Naive thymus-derived CD4-positive, alpha-beta T cell (primary cell): ENCODE measurements at regions of chr11 and their contacts with region 1.

Region 1: DNA sequence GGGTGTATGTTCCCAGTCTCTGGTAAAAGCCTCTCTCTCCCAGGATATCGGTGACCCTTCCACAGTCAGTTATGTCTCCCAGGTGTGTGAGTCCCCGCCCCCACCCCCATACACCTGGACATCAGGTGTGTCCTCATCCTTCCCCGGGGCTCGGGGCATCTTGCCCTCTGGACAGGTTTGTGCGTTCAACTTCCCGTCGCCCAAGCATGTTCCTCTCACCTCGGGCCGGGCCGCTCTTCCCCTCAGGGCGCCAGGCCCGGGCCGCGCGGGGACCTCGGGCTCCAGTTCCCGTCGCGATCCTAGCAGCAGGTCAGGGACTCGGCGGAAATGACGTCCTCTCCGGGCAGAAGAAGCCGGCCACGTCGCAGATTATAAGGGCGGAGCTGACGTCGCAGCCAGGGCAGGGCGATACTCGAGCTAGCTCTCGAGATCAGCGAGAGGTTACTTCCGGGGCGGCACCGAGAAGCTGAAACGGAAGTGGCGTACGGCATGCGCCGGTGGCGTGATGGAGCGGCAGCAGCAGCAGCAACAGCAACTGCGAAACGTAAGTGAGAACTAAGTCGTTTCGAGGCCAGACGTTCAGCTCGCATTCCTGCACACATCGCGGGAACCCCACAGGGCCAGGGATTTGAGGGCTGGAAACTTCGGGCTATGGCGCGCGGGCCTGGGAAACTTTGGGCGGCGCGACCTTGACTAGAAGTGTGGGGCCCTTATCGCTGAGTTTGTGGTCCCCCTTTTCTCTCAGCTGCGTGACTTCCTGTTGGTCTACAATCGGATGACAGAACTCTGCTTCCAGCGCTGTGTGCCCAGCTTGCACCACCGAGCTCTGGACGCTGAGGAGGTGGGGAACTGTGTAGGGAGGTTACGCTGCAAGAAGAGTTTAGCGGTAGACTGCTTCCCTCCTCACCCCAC is at the starts of genes ARFIP2 and TIMM10B:
- DNase-seq: peak; percentile 83 to 98 (median 94)
- ATAC-seq: peak; percentile 98
- H3K4me3 ChIP-seq: peak within 1 kb of the TSS; percentile 74
- H3K4me3 Mint-ChIP-seq: peak within 1 kb of the TSS; percentile 87 to 99 (median 97)
- H3K27ac ChIP-seq: peak within 1 kb of the TSS; percentile 86
- H3K27ac Mint-ChIP-seq: peak within 1 kb of the TSS; percentile 93 to 99 (median 98)
- H3K4me1 ChIP-seq: peaks cover 22 to 24% of the 10 kb centered on the region in 2 donors
- H3K4me1 Mint-ChIP-seq: peaks cover 29 to 48% (median 43%) of the 10 kb centered on the region in 7 donors
- H3K27me3 ChIP-seq: no peaks in the 10 kb centered on the region
- H3K27me3 Mint-ChIP-seq: no peaks in the 10 kb centered on the region
- total RNA-seq, gene ARFIP2: 48.6 to 63.4 (median 53.8) TPM
- total RNA-seq, gene TIMM10B: 39.3 to 68.4 (median 59.2) TPM

Region 2: GRCh38 chr11:4607781-4608666 is 1873.2 kb before region 1 on chr11 and contains the start of gene TRIM68:
- CTCF ChIA-PET with region 1: no interaction called
- POLR2A ChIA-PET with region 1: no interaction called
- intact Hi-C with region 1: loop called in 1 of 2 experiments (anchors 10 kb)
- DNase-seq: peak; percentile 87 to 96 (median 94)
- ATAC-seq: peak; percentile 100
- H3K4me3 ChIP-seq: peak within 1 kb of the TSS; percentile 80
- H3K4me3 Mint-ChIP-seq: peak within 1 kb of the TSS; percentile 80 to 97 (median 91)
- H3K27ac ChIP-seq: peak within 1 kb of the TSS; percentile 88
- H3K27ac Mint-ChIP-seq: peak within 1 kb of the TSS; percentile 85 to 96 (median 94)
- H3K4me1 ChIP-seq: peaks cover 15 to 22% of the 10 kb centered on the region in 2 donors
- H3K4me1 Mint-ChIP-seq: peaks cover 29 to 68% (median 56%) of the 10 kb centered on the region in 7 donors
- H3K27me3 ChIP-seq: no peaks in the 10 kb centered on the region
- H3K27me3 Mint-ChIP-seq: peaks cover 0 to 2% (median 0%) of the 10 kb centered on the region in 5 donors
- total RNA-seq, gene TRIM68: 3.8 to 29.5 (median 12.4) TPM

Region 3: DNA sequence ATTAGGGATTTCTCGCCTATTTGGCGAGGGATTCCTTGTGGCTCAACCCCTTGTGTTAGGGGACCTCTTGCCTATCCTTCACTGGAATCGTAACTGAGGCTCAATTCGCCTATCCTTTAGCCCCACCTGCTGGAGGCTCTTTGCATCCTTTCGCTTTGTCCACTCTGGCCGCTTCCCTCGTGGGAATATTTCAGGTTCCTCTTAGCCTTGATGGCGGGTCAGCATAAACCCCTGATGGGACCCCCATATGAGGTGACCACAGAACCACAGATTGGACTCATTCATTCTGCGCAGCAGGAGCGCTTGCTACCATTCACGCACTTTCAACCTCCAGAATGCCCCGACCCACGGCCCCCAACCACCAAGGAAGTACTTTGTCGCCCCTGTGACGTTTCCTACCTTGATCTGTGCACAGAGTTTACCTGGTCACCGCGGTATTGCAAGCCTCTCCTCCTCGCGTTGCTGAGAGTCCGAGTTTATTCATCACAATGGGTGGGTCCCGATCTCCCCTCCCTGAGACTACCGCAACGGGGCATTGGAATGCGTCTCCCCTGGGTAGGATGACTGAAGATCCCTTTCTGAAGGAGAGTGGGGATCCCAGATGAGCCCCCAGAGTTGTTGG is 672.7 kb before region 1 on chr11 and contains the start of gene OR52N2:
- CTCF ChIA-PET with region 1: no interaction called
- POLR2A ChIA-PET with region 1: no interaction called
- intact Hi-C with region 1: no loop called
- DNase-seq: peak; percentile 38 to 73 (median 66)
- ATAC-seq: peak; percentile 92
- H3K4me3 ChIP-seq: peak within 1 kb of the TSS; percentile 61
- H3K4me3 Mint-ChIP-seq: peak within 1 kb of the TSS; percentile 86 to 95 (median 90)
- H3K27ac ChIP-seq: no peak within 1 kb of the TSS
- H3K27ac Mint-ChIP-seq: peak within 1 kb of the TSS in 8 of 9 donors; percentile 1 to 87 (median 20)
- H3K4me1 ChIP-seq: no peaks in the 10 kb centered on the region
- H3K4me1 Mint-ChIP-seq: peaks cover 7 to 16% (median 10%) of the 10 kb centered on the region in 7 donors
- H3K27me3 ChIP-seq: peaks cover 0 to 6% of the 10 kb centered on the region in 2 donors
- H3K27me3 Mint-ChIP-seq: peaks cover 12 to 29% (median 25%) of the 10 kb centered on the region in 5 donors
- total RNA-seq, gene OR52N2: not detected

Region 4: GRCh38 chr11:6389921-6390724 is 91.1 kb before region 1 on chr11 and contains the start of gene SMPD1:
- CTCF ChIA-PET with region 1: no interaction called
- POLR2A ChIA-PET with region 1: interaction called, 16 read pairs
- intact Hi-C with region 1: loop called (anchors 1 kb)
- DNase-seq: peak; percentile 85 to 94 (median 92)
- ATAC-seq: peak; percentile 97
- H3K4me3 ChIP-seq: peak within 1 kb of the TSS; percentile 94
- H3K4me3 Mint-ChIP-seq: peak within 1 kb of the TSS; percentile 91 to 98 (median 94)
- H3K27ac ChIP-seq: peak within 1 kb of the TSS; percentile 95
- H3K27ac Mint-ChIP-seq: peak within 1 kb of the TSS; percentile 93 to 100 (median 99)
- H3K4me1 ChIP-seq: peaks cover 25 to 53% of the 10 kb centered on the region in 2 donors
- H3K4me1 Mint-ChIP-seq: peaks cover 31 to 74% (median 66%) of the 10 kb centered on the region in 7 donors
- H3K27me3 ChIP-seq: no peaks in the 10 kb centered on the region
- H3K27me3 Mint-ChIP-seq: peaks cover 0 to 13% (median 0%) of the 10 kb centered on the region in 5 donors
- total RNA-seq, gene SMPD1: 43.0 to 70.9 (median 55.4) TPM

Region 5: DNA sequence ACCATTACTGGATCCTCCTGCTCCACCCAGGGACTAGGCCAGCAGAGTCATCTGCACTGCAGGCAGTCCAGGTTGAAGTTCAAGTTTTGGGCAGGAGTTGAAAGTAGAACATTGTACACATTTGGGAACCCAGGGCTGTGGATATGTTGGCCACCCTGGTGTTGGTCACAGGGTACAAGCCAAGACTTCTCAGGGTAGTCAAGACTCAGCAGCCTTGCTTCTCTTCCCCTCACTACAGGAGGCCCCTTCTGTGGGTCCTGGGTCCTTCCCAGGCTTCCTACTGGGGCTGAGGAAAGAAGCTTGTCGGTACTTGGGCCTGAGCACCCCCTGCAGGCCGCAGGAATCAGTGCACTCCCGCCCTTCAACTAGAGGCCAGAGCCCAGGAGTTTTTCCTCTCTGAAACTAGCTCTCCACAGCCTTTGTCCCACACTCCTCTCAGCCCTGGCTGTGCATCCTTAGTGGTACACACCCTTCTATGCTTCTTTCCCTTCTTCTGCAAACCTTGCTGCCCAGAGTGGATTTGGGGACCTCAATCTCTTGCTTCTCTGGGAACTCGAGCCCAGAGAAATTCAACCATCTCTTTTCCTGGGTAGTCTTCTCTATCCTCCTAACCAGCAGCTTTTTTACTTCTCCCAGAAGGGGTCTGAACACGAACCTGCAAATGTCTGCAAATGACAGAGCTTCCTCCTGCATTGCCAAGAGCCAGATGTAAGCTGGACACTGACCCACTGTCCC is 37.8 kb before region 1 on chr11:
- CTCF ChIA-PET with region 1: no interaction called
- POLR2A ChIA-PET with region 1: interaction called, 3 read pairs
- intact Hi-C with region 1: loop called (anchors 2 to 5 kb)
- DNase-seq: peak; percentile 28 to 67 (median 53)
- ATAC-seq: peak; percentile 87
- H3K4me3 ChIP-seq: no peak overlapping the region
- H3K4me3 Mint-ChIP-seq: no peak overlapping the region
- H3K27ac ChIP-seq: no peak overlapping the region
- H3K27ac Mint-ChIP-seq: no peak overlapping the region
- H3K4me1 ChIP-seq: peaks cover 12 to 19% of the 10 kb centered on the region in 2 donors
- H3K4me1 Mint-ChIP-seq: peaks cover 0 to 5% (median 0%) of the 10 kb centered on the region in 7 donors
- H3K27me3 ChIP-seq: no peaks in the 10 kb centered on the region
- H3K27me3 Mint-ChIP-seq: peaks cover 0 to 12% (median 0%) of the 10 kb centered on the region in 5 donors

Region 6: DNA sequence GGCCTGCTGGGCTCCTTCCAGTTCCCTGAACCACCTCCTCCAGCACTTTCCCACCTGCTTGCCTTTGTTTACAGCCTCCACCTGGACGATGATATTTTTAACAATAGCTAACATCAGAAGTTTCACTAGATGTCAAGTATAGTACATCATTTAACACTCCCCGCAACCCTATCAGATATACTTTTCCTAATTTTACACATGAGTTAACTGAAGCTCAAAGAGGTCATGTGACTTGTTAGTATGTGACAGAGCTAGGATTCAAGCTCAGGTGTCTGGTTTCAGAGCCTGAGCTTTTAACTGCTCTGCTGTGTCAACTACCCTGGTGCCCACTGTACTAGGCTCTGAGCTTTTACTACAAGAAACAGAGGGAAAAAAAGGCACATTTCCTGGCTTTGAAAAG is 26.2 kb before region 1 on chr11:
- CTCF ChIA-PET with region 1: no interaction called
- POLR2A ChIA-PET with region 1: no interaction called
- intact Hi-C with region 1: no loop called
- DNase-seq: no peak
- ATAC-seq: no peak
- H3K4me3 ChIP-seq: no peak overlapping the region
- H3K4me3 Mint-ChIP-seq: no peak overlapping the region
- H3K27ac ChIP-seq: no peak overlapping the region
- H3K27ac Mint-ChIP-seq: no peak overlapping the region
- H3K4me1 ChIP-seq: no peaks in the 10 kb centered on the region
- H3K4me1 Mint-ChIP-seq: no peaks in the 10 kb centered on the region
- H3K27me3 ChIP-seq: no peaks in the 10 kb centered on the region
- H3K27me3 Mint-ChIP-seq: no peaks in the 10 kb centered on the region

Region 7: GRCh38 chr11:6531267-6531752 is 50.0 kb after region 1 on chr11:
- CTCF ChIA-PET with region 1: no interaction called
- POLR2A ChIA-PET with region 1: no interaction called
- intact Hi-C with region 1: loop called (anchors 2 to 5 kb)
- DNase-seq: peak in 7 of 9 donors; percentile 7 to 51 (median 39)
- ATAC-seq: peak; percentile 83
- H3K4me3 ChIP-seq: no peak overlapping the region
- H3K4me3 Mint-ChIP-seq: no peak overlapping the region
- H3K27ac ChIP-seq: no peak overlapping the region
- H3K27ac Mint-ChIP-seq: no peak overlapping the region
- H3K4me1 ChIP-seq: peaks cover 4 to 5% of the 10 kb centered on the region in 2 donors
- H3K4me1 Mint-ChIP-seq: peaks cover 5 to 14% (median 11%) of the 10 kb centered on the region in 7 donors
- H3K27me3 ChIP-seq: no peaks in the 10 kb centered on the region
- H3K27me3 Mint-ChIP-seq: no peaks in the 10 kb centered on the region

Region 8: DNA sequence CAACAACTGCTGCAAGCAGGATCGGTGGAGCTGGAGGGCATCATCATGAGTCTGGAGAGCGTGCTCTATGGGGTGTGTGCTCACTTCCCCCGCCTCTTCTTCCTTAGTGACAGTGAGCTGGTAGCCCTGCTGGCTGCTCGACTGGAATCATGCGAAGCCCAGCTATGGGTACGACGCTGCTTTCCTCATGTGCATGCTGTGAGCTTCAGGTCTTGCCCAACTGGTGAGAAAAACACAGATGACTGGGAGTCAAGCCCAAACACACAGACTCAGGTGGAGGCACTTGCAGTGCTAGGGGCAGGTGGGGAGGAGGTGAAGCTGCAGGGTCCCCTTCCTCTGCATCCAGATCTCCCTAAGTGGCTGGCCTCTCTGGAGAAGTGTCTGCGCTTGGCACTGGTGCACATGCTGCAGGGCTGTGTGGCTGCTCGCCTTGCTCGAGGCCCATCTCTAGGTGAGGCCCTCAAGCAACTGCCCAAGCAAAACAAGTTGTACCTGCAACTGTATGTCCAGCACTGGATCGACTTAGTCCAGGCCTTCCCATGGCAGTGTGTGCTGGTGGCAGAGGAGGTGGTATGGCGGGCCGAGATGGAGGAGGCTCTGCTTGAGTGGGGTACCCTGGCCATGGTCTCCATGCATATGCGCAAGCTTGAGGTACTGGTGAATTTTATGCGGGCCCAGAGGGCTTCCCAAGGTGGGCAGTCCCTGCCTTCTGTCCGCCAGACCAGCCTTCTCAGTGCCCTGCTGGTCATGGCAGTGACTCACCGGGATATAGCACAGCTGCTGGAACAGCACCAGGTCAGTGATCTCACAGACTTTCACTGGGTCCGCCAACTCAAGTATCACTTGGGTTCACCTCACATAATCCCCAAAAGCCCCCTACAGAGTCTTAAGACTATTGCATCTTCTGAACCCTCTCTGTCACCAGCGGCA is 63.9 kb after region 1 on chr11:
- CTCF ChIA-PET with region 1: no interaction called
- POLR2A ChIA-PET with region 1: no interaction called
- intact Hi-C with region 1: no loop called
- DNase-seq: no peak
- ATAC-seq: no peak
- H3K4me3 ChIP-seq: no peak overlapping the region
- H3K4me3 Mint-ChIP-seq: no peak overlapping the region
- H3K27ac ChIP-seq: no peak overlapping the region
- H3K27ac Mint-ChIP-seq: no peak overlapping the region
- H3K4me1 ChIP-seq: no peaks in the 10 kb centered on the region
- H3K4me1 Mint-ChIP-seq: peaks cover 0 to 19% (median 5%) of the 10 kb centered on the region in 7 donors
- H3K27me3 ChIP-seq: no peaks in the 10 kb centered on the region
- H3K27me3 Mint-ChIP-seq: no peaks in the 10 kb centered on the region

Region 9: DNA sequence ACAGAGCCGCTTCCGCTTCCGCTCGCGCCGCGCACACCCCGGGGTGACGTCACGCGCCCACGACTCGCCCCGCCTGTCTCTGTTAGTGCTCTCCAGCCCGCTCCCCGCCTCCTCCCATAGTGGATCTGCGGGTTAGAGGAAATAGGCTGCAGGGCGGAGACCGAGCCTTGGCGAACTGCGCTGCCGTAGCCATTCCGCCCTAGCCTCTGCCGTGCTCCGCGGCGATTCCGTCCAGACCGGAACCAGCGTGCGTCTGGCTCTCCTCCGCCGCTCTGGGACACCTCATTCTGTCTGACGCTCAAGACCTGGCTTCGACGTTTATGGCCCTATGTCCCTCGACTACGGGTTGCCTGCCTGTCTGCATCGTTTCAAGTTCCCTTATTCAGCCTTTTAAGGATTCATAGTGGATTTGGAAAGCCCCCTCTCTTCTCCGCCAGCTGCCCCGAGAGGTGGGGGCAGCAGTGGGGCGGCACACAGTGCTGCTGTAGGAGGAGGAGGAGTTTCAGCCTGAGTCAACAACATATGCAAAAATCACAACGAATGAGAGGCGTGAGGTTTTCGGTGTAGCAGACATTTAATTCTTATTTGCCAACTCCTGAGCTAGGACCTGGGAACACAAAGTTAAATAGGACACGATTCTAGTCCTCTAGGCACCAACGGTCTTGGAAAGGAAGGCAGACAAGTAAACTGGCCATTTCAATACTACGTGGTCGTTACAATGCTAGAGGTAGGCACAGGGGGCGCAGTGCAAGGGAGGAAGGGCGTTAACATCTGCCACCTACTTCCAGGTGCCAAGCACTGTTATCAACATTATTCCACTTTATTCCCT is 131.2 kb after region 1 on chr11 and contains the start of gene TAF10:
- CTCF ChIA-PET with region 1: no interaction called
- POLR2A ChIA-PET with region 1: interaction called, 14 read pairs
- intact Hi-C with region 1: loop called (anchors 1 kb)
- DNase-seq: peak; percentile 89 to 97 (median 95)
- ATAC-seq: peak; percentile 94
- H3K4me3 ChIP-seq: peak within 1 kb of the TSS; percentile 83
- H3K4me3 Mint-ChIP-seq: peak within 1 kb of the TSS in 6 of 10 donors; percentile 84 to 94 (median 92)
- H3K27ac ChIP-seq: peak within 1 kb of the TSS; percentile 91
- H3K27ac Mint-ChIP-seq: peak within 1 kb of the TSS in 5 of 9 donors; percentile 90 to 98 (median 96)
- H3K4me1 ChIP-seq: peaks cover 25% of the 10 kb centered on the region in 2 donors
- H3K4me1 Mint-ChIP-seq: peaks cover 9 to 46% (median 33%) of the 10 kb centered on the region in 7 donors
- H3K27me3 ChIP-seq: no peaks in the 10 kb centered on the region
- H3K27me3 Mint-ChIP-seq: no peaks in the 10 kb centered on the region
- total RNA-seq, gene TAF10: 116 to 135 (median 128) TPM

Region 10: DNA sequence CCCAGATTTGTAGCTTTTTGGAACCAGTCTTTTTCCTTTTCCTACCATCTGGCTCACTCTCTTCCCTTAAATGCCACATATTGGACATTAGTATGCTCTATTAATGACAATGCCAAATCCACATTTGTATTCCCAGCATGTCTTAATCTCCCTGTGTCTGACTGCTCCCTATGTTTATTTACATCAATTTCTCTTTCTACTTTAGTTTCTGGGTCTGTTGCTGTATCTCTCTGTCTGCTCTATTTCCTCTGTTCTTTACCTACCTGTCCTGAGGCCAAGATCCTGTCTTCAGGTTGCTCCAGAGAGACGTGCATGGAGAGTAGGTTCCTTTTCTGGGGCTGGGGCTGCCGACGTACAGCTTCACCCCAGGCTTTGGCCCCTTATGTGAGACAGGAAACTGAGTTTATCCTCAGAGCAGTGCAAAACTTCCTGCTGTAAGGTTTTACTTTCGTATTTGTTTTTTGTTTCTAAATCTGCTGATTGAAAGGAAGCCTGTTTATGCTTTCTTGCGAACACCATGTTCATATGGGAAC is 264.9 kb after region 1 on chr11:
- CTCF ChIA-PET with region 1: interaction called, 6 read pairs
- POLR2A ChIA-PET with region 1: interaction called, 6 read pairs
- intact Hi-C with region 1: loop called (anchors 1 to 2 kb)
- DNase-seq: peak in 8 of 9 donors; percentile 32 to 66 (median 64)
- ATAC-seq: peak; percentile 89
- H3K4me3 ChIP-seq: peak overlapping the region; percentile 80
- H3K4me3 Mint-ChIP-seq: no peak overlapping the region
- H3K27ac ChIP-seq: peak overlapping the region; percentile 85
- H3K27ac Mint-ChIP-seq: no peak overlapping the region
- H3K4me1 ChIP-seq: peaks cover 18 to 37% of the 10 kb centered on the region in 2 donors
- H3K4me1 Mint-ChIP-seq: peaks cover 26 to 48% (median 29%) of the 10 kb centered on the region in 7 donors
- H3K27me3 ChIP-seq: no peaks in the 10 kb centered on the region
- H3K27me3 Mint-ChIP-seq: no peaks in the 10 kb centered on the region